GM18951 (cell line): ENCODE measurements at regions of chr6 and their contacts with region 1.

Region 1: GRCh38 chr6:64330694-64331307 is 695.2 kb downstream of the PHF3 start:
- POLR2A ChIP-seq: no peak

Region 2: GRCh38 chr6:63685446-63686379 is 645.1 kb before region 1 on chr6:
- in situ Hi-C with region 1: no loop called
- POLR2A ChIP-seq: no peak

Region 3: GRCh38 chr6:63941747-63942470 is 388.9 kb before region 1 on chr6:
- in situ Hi-C with region 1: loop called (anchors 25 kb)
- POLR2A ChIP-seq: no peak

Region 4: DNA sequence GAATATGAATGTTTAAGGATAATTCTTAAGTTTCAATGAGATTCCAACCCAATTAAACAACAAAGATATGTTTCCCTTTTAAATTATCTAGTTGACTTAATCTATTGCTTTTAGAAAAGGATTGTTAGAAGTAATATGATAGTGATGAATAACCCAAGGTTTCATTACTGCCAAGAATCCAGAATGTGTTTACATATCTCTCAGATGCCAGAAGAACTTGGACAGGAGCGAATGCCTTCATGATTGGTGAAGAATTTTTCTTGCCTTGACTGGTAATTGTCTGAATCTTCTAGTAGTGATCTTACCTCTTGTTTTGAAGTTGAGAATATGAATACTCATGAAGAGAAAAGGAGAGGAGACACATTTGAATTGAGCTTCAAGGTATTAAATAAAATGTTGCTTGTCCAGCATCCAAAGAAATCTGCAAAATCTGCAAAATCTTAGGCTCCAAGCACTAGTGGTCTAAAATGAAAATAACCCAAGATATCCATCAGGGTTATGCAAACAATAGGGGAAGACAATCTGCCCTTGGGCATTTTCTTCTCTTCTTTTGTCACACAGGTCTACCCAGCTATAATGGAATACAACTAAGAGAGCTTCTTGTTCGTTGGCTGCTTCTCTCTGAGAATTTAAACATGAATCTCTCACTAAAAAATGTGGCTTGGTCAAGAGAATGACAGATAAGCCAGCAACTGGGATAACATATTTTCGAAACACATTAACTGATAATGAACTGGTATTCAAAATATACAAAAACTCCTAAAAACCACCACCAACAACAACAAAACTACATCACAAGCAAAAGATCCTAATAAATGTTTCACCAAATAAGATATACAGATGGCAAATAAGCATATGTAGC is 447.4 kb after region 1 on chr6:
- in situ Hi-C with region 1: no loop called
- POLR2A ChIP-seq: no peak